Activated CD4-positive, alpha-beta memory T cell treated with anti-CD3 and anti-CD28 coated beads for 36 hours (primary cell): ENCODE measurements at regions of chr4 and their contacts with region 1.

Region 1: DNA sequence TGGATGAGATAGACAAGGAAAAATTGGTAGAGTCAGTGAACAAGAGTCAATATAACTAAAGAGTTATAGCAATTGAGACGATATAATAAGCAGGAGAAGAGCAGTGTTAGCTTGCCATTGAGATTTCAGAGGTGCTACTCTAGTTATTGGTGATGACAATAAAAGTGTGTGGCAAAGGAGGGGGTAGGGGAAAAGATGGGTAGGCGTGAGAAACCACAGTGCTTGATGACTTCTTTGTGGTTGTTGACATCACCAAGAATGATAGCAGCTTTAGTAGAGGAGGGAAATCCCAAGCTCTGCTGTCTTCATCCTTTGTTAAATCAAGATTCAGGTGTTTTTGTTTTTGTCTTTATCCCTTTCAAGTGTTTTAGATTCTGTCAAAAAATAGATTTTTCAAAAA is 179.9 kb upstream of the PPP3CA start:
- DNase-seq: peak; percentile 87
- H3K4me3 Mint-ChIP-seq: peak overlapping the region; percentile 12
- H3K27ac Mint-ChIP-seq: peak overlapping the region; percentile 30
- H3K4me1 Mint-ChIP-seq: peaks cover 20% of the 10 kb centered on the region
- H3K27me3 Mint-ChIP-seq: peaks cover 38% of the 10 kb centered on the region

Region 2: GRCh38 chr4:101515099-101515498 is 12.1 kb before region 1 on chr4:
- CTCF ChIA-PET with region 1: no interaction called
- POLR2A ChIA-PET with region 1: interaction called, 3 read pairs
- intact Hi-C with region 1: loop called (anchors 1 kb)
- DNase-seq: no peak
- H3K4me3 Mint-ChIP-seq: no peak overlapping the region
- H3K27ac Mint-ChIP-seq: no peak overlapping the region
- H3K4me1 Mint-ChIP-seq: peaks cover 10% of the 10 kb centered on the region
- H3K27me3 Mint-ChIP-seq: peaks cover 11% of the 10 kb centered on the region

Region 3: GRCh38 chr4:101596781-101597552 is 69.8 kb after region 1 on chr4:
- CTCF ChIA-PET with region 1: no interaction called
- POLR2A ChIA-PET with region 1: no interaction called
- intact Hi-C with region 1: no loop called
- DNase-seq: peak; percentile 18
- H3K4me3 Mint-ChIP-seq: no peak overlapping the region
- H3K27ac Mint-ChIP-seq: no peak overlapping the region
- H3K4me1 Mint-ChIP-seq: no peaks in the 10 kb centered on the region
- H3K27me3 Mint-ChIP-seq: peaks cover 3% of the 10 kb centered on the region

Region 4: GRCh38 chr4:102007959-102008425 is 480.8 kb after region 1 on chr4:
- CTCF ChIA-PET with region 1: no interaction called
- POLR2A ChIA-PET with region 1: no interaction called
- intact Hi-C with region 1: loop called (anchors 5 kb)
- DNase-seq: no peak
- H3K4me3 Mint-ChIP-seq: no peak overlapping the region
- H3K27ac Mint-ChIP-seq: no peak overlapping the region
- H3K4me1 Mint-ChIP-seq: peaks cover 10% of the 10 kb centered on the region
- H3K27me3 Mint-ChIP-seq: no peaks in the 10 kb centered on the region